ENCODE measurements at regions of chr17 and their contacts with region 1.

Region 1: DNA sequence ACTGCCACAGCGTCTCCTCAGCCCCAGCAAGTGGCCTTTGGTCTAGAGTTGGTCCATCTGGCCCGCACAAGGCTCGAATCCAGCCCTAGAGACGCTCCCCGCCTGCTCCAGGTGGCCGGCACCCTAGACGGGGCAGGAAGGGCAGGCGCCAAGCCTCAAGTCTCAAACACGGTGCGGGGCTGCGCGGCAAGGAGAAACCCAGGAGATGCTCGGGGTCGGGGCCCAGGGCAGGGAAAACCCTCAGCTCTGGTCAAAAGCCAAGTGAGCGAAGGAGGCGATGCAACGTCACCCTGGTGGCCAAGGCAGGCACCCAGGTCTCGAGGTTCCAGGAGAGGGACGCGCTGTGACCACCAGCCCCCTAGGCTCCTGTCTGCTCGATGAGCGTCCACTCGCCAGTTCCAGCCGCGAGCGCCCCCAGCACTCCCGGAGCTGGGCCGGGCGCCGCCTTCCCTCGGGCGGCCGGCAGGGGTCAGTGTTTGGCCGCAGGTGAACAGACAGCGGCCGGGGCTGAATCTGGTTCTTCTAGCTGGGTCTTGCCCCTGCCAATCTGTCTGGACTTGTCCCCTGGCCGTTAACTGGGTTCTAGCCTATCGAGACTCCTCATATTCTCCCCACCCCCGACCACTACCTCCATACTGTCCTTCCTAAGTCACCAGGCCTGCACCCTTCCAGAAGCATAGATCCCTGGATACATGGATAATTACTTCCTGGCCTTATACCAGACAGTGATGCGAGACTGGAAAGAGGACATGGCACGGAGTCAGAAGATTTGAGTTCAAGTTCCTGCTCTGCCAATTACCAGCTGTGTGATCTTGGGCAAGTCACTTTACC is 44.0 kb downstream of the PRAC1 start:
- DNase-seq: peak; percentile 89
- CTCF ChIP-seq: peak; percentile 92

Region 2: DNA sequence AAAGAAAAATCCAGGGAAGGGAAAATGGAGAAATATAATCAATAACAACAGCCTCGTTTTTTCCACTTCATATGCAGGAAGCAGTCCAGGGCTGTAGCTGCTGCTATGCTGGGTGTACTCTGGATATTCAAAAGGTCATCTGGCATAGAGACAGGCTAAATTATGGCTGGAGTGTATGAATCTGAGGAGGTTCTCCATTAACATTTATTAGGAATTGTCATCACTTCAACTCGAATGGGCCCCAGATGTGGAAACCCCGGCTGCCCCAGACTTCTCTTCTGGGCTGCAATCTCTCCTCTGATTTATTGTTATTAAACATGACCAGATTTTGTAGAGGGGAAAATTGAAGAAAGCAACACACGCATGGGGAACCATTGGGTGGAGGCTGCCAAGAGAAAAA is 214.8 kb before region 1 on chr17:
- CTCF ChIA-PET with region 1: no interaction called
- POLR2A ChIA-PET with region 1: no interaction called
- DNase-seq: no peak
- CTCF ChIP-seq: no peak

Region 3: GRCh38 chr17:48636177-48637018 is 42.0 kb before region 1 on chr17:
- CTCF ChIA-PET with region 1: interaction called, 16 read pairs
- POLR2A ChIA-PET with region 1: no interaction called
- DNase-seq: peak; percentile 82
- CTCF ChIP-seq: peak; percentile 78

Region 4: GRCh38 chr17:48663134-48663924 is 15.0 kb before region 1 on chr17:
- CTCF ChIA-PET with region 1: interaction called, 50 read pairs
- POLR2A ChIA-PET with region 1: no interaction called
- DNase-seq: no peak
- CTCF ChIP-seq: no peak

Region 5: DNA sequence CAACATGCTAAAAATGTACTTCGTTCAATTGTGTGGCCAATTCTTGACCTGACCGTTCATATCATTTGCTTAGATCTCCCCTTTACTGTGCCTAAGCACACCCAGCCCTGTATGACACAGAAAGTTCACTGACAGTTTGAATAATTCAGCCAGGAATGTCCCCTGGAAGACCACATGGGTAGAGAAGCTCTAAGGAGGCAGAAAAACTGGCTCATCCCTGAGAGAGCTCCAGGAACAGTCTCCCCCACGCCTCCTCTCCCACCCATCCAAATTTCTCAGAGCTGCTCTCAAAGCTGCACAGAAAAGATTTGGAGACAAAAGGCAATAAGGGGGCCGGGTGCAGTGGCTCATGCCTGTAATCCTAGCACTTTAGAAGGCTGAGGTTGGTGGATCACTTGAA is 32.7 kb after region 1 on chr17:
- CTCF ChIA-PET with region 1: interaction called, 17 read pairs
- POLR2A ChIA-PET with region 1: no interaction called
- DNase-seq: no peak
- CTCF ChIP-seq: no peak

Region 6: DNA sequence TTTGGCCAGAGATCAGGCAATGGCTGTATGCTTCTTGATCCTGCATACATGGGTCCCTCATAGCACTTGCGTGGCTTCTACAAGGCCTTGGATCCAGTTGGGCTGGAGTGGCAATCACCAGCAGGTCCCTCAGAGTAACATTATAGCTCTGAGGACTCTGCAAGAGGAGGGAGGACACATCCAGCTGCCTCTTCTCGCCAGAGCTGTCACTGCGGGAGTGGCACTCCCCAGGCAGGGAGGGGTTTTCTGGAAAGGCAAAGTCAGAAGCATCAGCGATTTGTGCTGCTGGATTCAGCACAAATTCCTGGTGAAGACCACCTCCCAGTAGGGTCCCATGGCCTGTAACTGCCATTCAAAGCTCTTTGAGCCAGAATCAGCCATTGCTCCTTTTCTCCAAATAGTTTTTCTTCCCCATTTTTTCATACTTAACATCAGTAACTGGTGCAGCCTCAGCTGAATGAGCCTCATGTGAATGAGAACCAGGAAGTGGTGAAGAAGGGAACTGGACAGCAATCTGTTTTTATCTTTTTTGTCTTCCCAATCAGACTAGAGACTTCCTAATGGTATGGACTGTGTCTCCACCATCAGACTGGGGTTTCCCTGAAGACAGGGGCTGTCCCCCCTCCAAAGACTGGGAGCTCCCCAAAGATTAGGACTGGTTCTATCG is 90.8 kb after region 1 on chr17:
- CTCF ChIA-PET with region 1: interaction called, 11 read pairs
- POLR2A ChIA-PET with region 1: no interaction called
- DNase-seq: no peak
- CTCF ChIP-seq: no peak

Region 7: DNA sequence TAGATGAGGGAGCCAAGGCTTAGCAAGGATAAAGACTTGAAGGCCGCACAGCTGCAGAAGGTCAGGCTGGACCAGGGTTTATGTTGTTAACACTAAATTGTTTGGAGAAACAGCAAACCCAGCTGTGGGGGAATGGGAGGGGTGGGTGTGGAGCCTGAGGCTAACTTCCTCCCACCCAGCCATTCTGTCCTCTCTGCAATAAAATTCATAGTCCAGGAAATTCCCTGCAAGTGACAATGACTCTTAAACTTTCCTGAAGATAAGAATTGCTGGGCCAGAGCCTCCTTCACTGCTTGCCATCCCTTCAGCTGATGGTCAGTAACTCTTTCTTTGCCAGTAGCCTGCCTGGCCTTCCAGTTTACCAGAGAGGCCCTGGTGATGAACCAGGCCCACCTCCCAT is 194.9 kb after region 1 on chr17:
- CTCF ChIA-PET with region 1: interaction called, 78 read pairs
- POLR2A ChIA-PET with region 1: no interaction called
- DNase-seq: no peak
- CTCF ChIP-seq: no peak